Heart left ventricle (tissue), 16 donors: ENCODE measurements at regions of chr13 and their contacts with region 1.

Region 1: GRCh38 chr13:43316946-43317353 is 293.6 kb downstream of the DNAJC15 start:
- DNase-seq: peak in 4 of 5 donors; percentile 22 to 35 (median 32)
- ATAC-seq: peak; percentile 49 to 70 (median 65)
- H3K4me3 ChIP-seq: peak overlapping the region in 1 of 12 donors; percentile 6
- H3K27ac ChIP-seq: peak overlapping the region in 1 of 12 donors; percentile 45
- H3K4me1 ChIP-seq: peaks cover 0 to 14% (median 6%) of the 10 kb centered on the region in 12 donors
- H3K27me3 ChIP-seq: no peaks in the 10 kb centered on the region
- CTCF ChIP-seq: no peak
- POLR2A ChIP-seq: no peak

Region 2: DNA sequence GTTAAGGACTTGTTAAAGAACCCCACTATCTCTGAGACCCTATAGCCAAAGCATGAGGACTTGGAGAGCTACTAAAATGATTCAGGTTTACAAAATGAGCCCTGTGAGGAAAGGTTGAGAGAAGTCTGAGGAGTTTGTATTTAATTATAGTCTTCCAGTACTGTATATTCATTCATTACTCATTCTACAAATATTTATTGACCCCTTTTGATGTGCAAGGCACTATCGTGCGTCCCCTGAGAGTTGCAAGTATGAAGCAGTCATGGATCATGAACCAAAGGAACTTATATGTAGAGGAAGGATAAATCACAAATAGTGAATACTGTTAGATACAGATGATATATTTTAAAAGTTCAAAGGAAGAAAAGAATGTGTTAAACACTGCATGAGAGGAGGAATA is 209.2 kb before region 1 on chr13:
- intact Hi-C with region 1: no loop called
- DNase-seq: no peak
- ATAC-seq: no peak
- H3K4me3 ChIP-seq: no peak overlapping the region
- H3K27ac ChIP-seq: no peak overlapping the region
- H3K4me1 ChIP-seq: peaks cover 0 to 17% (median 2%) of the 10 kb centered on the region in 12 donors
- H3K27me3 ChIP-seq: no peaks in the 10 kb centered on the region
- CTCF ChIP-seq: no peak
- POLR2A ChIP-seq: no peak

Region 3: DNA sequence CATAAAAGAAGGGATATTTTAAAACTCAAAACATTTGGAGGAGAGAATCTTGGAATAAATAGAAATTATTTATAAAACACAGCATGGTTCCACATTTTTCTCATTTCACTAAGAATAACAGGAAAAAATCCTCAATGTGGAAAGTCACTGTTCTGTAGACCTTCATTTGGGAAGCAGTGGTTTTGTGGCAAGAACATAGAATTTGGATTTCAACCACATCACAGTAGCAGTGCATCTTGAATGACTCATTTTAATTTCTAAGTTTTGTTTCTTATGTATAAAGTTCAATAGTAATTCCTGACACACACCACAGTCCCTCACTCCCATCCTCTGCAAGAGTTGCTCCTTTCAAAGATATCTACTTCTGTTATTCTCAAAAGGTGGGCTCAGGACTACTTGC is 205.8 kb after region 1 on chr13:
- intact Hi-C with region 1: loop called in 1 of 10 experiments (anchors 10 kb)
- DNase-seq: no peak
- ATAC-seq: no peak
- H3K4me3 ChIP-seq: no peak overlapping the region
- H3K27ac ChIP-seq: no peak overlapping the region
- H3K4me1 ChIP-seq: no peaks in the 10 kb centered on the region
- H3K27me3 ChIP-seq: no peaks in the 10 kb centered on the region
- CTCF ChIP-seq: no peak
- POLR2A ChIP-seq: no peak